H1 (cell line): ENCODE measurements at regions of chr15 and their contacts with region 1.

Region 1: GRCh38 chr15:84883433-84883832 is 1.0 kb upstream of the SLC28A1 start:
- DNase-seq: no peak
- H3K4me3 ChIP-seq: no peak overlapping the region
- H3K27ac ChIP-seq: no peak overlapping the region
- H3K4me1 ChIP-seq: no peaks in the 10 kb centered on the region; a peak in 1 of 7 replicates
- H3K27me3 ChIP-seq: no peaks in the 10 kb centered on the region
- CTCF ChIP-seq: no peak
- EP300 ChIP-seq: no peak
- POLR2A ChIP-seq: no peak
- RAD21 ChIP-seq: no peak

Region 2: GRCh38 chr15:84833447-84834228 is 49.8 kb before region 1 on chr15:
- CTCF ChIA-PET with region 1: interaction called, 15 read pairs
- POLR2A ChIA-PET with region 1: no interaction called
- DNase-seq: no peak
- H3K4me3 ChIP-seq: no peak overlapping the region
- H3K27ac ChIP-seq: no peak overlapping the region
- H3K4me1 ChIP-seq: no peaks in the 10 kb centered on the region
- H3K27me3 ChIP-seq: no peaks in the 10 kb centered on the region
- CTCF ChIP-seq: no peak
- EP300 ChIP-seq: no peak
- POLR2A ChIP-seq: no peak
- RAD21 ChIP-seq: no peak

Region 3: DNA sequence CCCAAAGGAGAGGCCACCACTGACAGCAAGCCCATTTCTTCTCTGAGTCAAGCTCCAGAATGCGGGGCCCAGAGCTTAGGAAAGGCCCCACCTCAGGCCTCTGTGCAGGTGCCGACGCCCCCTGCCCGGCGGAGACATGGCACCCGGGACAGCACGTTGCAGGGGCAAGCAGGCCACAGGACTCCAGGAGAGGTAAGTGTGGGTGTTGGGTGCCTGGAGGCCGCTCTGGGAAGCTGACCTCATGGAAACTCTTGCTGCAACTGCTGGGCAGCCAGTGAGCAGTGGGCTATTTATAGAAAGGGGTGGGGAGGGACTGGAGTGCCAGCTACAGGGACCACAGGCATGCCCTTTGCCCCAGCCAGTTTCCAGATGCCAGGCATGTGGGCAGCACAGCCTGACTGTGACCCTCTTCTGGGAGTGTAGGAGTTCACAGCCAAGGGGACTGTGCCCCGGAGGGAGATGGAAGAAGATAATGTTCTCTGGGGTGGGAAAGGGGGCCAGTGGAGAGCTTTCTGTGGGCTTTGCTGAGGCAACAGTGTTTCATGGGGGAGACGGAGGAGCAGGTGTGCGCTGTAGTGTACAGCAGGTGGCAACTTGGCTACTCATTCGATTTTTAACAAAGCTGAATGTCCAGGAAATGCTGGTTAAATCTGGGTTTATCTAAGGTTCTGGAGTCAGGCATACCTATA is 42.5 kb before region 1 on chr15:
- CTCF ChIA-PET with region 1: interaction called, 15 read pairs
- POLR2A ChIA-PET with region 1: no interaction called
- DNase-seq: no peak
- H3K4me3 ChIP-seq: no peak overlapping the region
- H3K27ac ChIP-seq: no peak overlapping the region
- H3K4me1 ChIP-seq: no peaks in the 10 kb centered on the region
- H3K27me3 ChIP-seq: no peaks in the 10 kb centered on the region
- CTCF ChIP-seq: no peak
- EP300 ChIP-seq: no peak
- POLR2A ChIP-seq: no peak
- RAD21 ChIP-seq: no peak

Region 4: GRCh38 chr15:84863565-84864443 is 19.6 kb before region 1 on chr15:
- CTCF ChIA-PET with region 1: interaction called, 74 read pairs
- POLR2A ChIA-PET with region 1: interaction called, 6 read pairs
- DNase-seq: no peak
- H3K4me3 ChIP-seq: no peak overlapping the region
- H3K27ac ChIP-seq: no peak overlapping the region
- H3K4me1 ChIP-seq: no peaks in the 10 kb centered on the region
- H3K27me3 ChIP-seq: no peaks in the 10 kb centered on the region
- CTCF ChIP-seq: peak in 2 of 3 experiments; percentile 21 to 25; a peak in 3 of 4 replicates
- EP300 ChIP-seq: no peak
- POLR2A ChIP-seq: no peak
- RAD21 ChIP-seq: peak; percentile 34 to 47; a peak in 3 of 4 replicates

Region 5: DNA sequence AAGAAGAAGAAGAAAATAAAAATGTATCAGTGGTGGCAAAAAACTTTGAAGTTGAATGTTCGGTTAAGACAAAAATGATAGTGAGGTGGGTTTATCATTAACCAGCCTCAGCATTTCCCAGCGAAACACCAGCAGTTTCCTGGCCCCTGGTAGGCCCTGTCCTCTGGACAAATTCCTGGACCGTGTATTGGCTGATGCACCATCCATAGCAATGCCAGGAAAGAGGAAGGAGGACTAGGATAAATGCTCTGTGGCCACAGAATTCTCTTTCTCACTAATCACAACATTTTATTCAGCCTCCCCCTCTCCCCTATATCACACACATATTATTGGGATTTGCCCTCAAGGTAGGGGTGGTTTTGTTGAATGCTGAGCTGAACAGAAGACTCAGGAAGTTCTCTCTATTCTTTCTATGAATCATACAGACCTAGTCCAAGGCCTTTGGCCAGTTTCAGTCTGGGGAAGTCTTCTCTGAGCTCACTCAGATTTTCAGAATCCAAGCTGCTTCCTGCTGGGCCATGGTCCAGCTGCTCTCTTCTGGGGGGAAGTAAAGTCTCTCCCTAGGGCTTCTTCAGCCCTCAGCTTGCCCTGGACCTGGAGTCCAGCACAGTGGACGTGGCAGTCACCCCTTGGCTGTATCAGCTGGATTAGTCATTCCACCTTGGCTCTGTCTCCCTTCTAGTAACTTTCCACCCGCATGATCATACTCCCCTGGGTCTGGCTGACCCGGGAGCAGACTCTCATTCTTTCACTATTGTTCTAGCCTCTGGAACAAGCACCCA is 28.6 kb after region 1 on chr15:
- CTCF ChIA-PET with region 1: interaction called, 25 read pairs
- POLR2A ChIA-PET with region 1: interaction called, 4 read pairs
- DNase-seq: no peak
- H3K4me3 ChIP-seq: no peak overlapping the region
- H3K27ac ChIP-seq: no peak overlapping the region
- H3K4me1 ChIP-seq: no peaks in the 10 kb centered on the region; a peak in 2 of 7 replicates
- H3K27me3 ChIP-seq: no peaks in the 10 kb centered on the region
- CTCF ChIP-seq: no peak
- EP300 ChIP-seq: no peak
- POLR2A ChIP-seq: no peak
- RAD21 ChIP-seq: no peak